T-cell (primary cell): ENCODE measurements at regions of chr11 and their contacts with region 1.

Region 1: GRCh38 chr11:62108017-62108750 is 15.6 kb upstream of the INCENP start:
- DNase-seq: peak in 25 of 35 experiments; percentile 13 to 81 (median 29)
- ATAC-seq: peak; percentile 28 to 56 (median 46)
- H3K4me3 ChIP-seq: no peak overlapping the region
- H3K4me3 Mint-ChIP-seq: no peak overlapping the region
- H3K27ac ChIP-seq: no peak overlapping the region
- H3K27ac Mint-ChIP-seq: no peak overlapping the region
- H3K4me1 ChIP-seq: peaks cover 2 to 25% of the 10 kb centered on the region in 2 experiments
- H3K4me1 Mint-ChIP-seq: peaks cover 13 to 19% (median 16%) of the 10 kb centered on the region in 3 donors
- H3K27me3 ChIP-seq: peaks cover 0 to 4% of the 10 kb centered on the region in 2 experiments
- H3K27me3 Mint-ChIP-seq: no peaks in the 10 kb centered on the region

Region 2: GRCh38 chr11:61792310-61793085 is 315.7 kb before region 1 on chr11 and contains the starts of genes FEN1 and TMEM258:
- CTCF ChIA-PET with region 1: interaction called, 3 to 61 read pairs
- POLR2A ChIA-PET with region 1: no interaction called
- DNase-seq: peak; percentile 79 to 91 (median 83)
- ATAC-seq: peak; percentile 90 to 94 (median 93)
- H3K4me3 ChIP-seq: peak within 1 kb of the TSS; percentile 73 to 76
- H3K4me3 Mint-ChIP-seq: peak within 1 kb of the TSS; percentile 83 to 98 (median 89)
- H3K27ac ChIP-seq: peak within 1 kb of the TSS; percentile 94
- H3K27ac Mint-ChIP-seq: peak within 1 kb of the TSS; percentile 95 to 98
- H3K4me1 ChIP-seq: peaks cover 8 to 25% of the 10 kb centered on the region in 2 experiments
- H3K4me1 Mint-ChIP-seq: peaks cover 27 to 43% (median 40%) of the 10 kb centered on the region in 3 donors
- H3K27me3 ChIP-seq: no peaks in the 10 kb centered on the region
- H3K27me3 Mint-ChIP-seq: no peaks in the 10 kb centered on the region
- total RNA-seq, gene FEN1: 8.5 to 12.6 (median 10.9) TPM
- total RNA-seq, gene TMEM258: 68.1 to 96.0 (median 87.8) TPM

Region 3: GRCh38 chr11:61871158-61871597 is 237.0 kb before region 1 on chr11:
- CTCF ChIA-PET with region 1: interaction called, 4 to 11 read pairs
- POLR2A ChIA-PET with region 1: no interaction called
- DNase-seq: peak; percentile 16 to 76 (median 56)
- ATAC-seq: peak; percentile 85 to 98 (median 88)
- H3K4me3 ChIP-seq: peak overlapping the region in 1 of 2 donors; percentile 52
- H3K4me3 Mint-ChIP-seq: peak overlapping the region; percentile 52 to 67 (median 62)
- H3K27ac ChIP-seq: no peak overlapping the region
- H3K27ac Mint-ChIP-seq: no peak overlapping the region
- H3K4me1 ChIP-seq: peaks cover 0 to 7% of the 10 kb centered on the region in 2 experiments
- H3K4me1 Mint-ChIP-seq: peaks cover 6 to 8% (median 7%) of the 10 kb centered on the region in 3 donors
- H3K27me3 ChIP-seq: peaks cover 0 to 24% of the 10 kb centered on the region in 2 experiments
- H3K27me3 Mint-ChIP-seq: peaks cover 0 to 7% of the 10 kb centered on the region in 2 donors

Region 4: DNA sequence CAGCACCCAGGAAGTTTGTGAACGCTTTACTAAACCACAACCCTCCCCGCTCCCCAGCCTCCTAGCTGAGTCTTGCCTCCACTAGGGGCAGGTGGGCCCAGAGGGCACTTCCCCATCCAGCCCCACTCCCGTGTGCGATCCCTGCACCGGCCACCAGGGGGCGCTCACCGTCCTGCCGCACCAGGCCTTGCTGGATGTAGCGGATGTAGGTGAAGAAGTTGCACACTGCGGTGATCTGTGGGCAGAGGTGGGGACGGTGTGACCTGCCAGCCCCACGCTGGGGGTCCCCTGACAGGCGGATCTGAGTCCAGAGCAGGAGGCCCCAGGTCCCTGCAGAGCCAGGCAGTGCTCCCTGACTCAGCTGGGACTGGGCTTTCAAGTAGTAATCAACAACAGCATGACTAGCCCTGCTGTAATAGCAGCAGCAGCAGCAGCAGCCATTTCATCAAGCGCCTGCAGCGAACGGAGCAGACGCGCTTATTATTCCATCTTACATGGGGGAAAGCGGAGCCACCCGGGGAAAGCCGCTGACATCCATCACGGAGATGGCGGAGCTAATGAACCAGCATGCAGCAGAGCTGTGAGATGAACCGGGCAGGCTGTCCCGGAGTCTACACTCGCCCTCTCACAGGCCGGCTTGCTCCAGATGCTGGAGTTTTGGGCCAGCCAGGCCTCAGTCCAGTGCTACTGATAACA is 208.9 kb before region 1 on chr11:
- CTCF ChIA-PET with region 1: interaction called, 23 to 51 read pairs
- POLR2A ChIA-PET with region 1: no interaction called
- DNase-seq: peak; percentile 82 to 97 (median 91)
- ATAC-seq: peak; percentile 89 to 92 (median 92)
- H3K4me3 ChIP-seq: no peak overlapping the region
- H3K4me3 Mint-ChIP-seq: no peak overlapping the region
- H3K27ac ChIP-seq: no peak overlapping the region
- H3K27ac Mint-ChIP-seq: peak overlapping the region; percentile 44 to 63
- H3K4me1 ChIP-seq: peaks cover 0 to 12% of the 10 kb centered on the region in 2 experiments
- H3K4me1 Mint-ChIP-seq: peaks cover 6 to 12% (median 8%) of the 10 kb centered on the region in 3 donors
- H3K27me3 ChIP-seq: peaks cover 0 to 9% of the 10 kb centered on the region in 2 experiments
- H3K27me3 Mint-ChIP-seq: peaks cover 0 to 3% of the 10 kb centered on the region in 2 donors

Region 5: DNA sequence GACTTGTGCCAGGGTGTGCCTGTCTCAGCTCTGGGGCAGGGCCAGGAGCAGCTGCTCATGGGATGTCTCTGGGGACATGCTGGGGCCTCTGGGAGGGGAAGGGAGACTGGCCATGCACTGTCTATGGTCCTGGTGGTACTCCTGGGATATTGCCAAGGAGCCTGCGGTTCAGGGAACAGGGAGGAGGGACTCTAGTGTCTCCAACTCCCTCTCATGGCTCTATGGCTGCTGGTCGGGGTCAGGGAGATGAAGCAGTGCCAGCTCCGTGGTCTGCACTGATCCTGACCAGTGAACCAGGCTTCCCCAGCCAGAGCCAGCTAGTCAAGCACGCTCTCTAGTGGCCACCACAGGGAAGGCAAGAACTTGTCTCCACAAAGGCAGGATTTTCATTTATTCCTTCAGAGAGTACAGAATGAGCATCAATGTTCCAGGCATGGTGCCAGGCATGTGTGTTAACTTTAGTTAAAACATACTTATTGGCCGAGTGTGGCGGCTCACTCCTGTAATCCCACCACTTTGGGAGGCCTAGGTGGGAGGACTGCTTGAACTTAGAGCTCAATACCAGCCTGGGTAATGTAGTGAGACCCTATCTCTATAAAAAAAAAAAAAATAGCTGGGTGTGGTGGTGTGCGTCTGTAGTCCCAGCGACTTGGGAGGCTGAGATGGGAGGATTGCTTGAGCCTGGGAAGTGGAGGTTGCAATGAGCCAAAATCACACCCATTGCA is 160.5 kb before region 1 on chr11:
- CTCF ChIA-PET with region 1: interaction called, 6 to 13 read pairs
- POLR2A ChIA-PET with region 1: no interaction called
- DNase-seq: peak in 32 of 35 experiments; percentile 25 to 78 (median 58)
- ATAC-seq: peak; percentile 45 to 76 (median 67)
- H3K4me3 ChIP-seq: no peak overlapping the region
- H3K4me3 Mint-ChIP-seq: no peak overlapping the region
- H3K27ac ChIP-seq: no peak overlapping the region
- H3K27ac Mint-ChIP-seq: no peak overlapping the region
- H3K4me1 ChIP-seq: peaks cover 0 to 6% of the 10 kb centered on the region in 2 experiments
- H3K4me1 Mint-ChIP-seq: no peaks in the 10 kb centered on the region
- H3K27me3 ChIP-seq: peaks cover 0 to 41% of the 10 kb centered on the region in 2 experiments
- H3K27me3 Mint-ChIP-seq: peaks cover 0 to 4% of the 10 kb centered on the region in 2 donors

Region 6: GRCh38 chr11:62123669-62124185 is 15.5 kb after region 1 on chr11 and contains the start of gene INCENP:
- CTCF ChIA-PET with region 1: interaction called, 3 to 12 read pairs
- POLR2A ChIA-PET with region 1: interaction called, 4 to 9 read pairs
- DNase-seq: peak; percentile 86 to 97 (median 95)
- ATAC-seq: peak; percentile 99 to 100 (median 99)
- H3K4me3 ChIP-seq: peak within 1 kb of the TSS; percentile 89 to 92
- H3K4me3 Mint-ChIP-seq: peak within 1 kb of the TSS; percentile 91 to 94 (median 91)
- H3K27ac ChIP-seq: peak within 1 kb of the TSS; percentile 40
- H3K27ac Mint-ChIP-seq: peak within 1 kb of the TSS; percentile 79 to 83
- H3K4me1 ChIP-seq: peaks cover 11 to 22% of the 10 kb centered on the region in 2 experiments
- H3K4me1 Mint-ChIP-seq: peaks cover 28 to 46% (median 30%) of the 10 kb centered on the region in 3 donors
- H3K27me3 ChIP-seq: no peaks in the 10 kb centered on the region
- H3K27me3 Mint-ChIP-seq: no peaks in the 10 kb centered on the region
- total RNA-seq, gene INCENP: 20.7 to 31.4 (median 24.9) TPM